Activated CD8-positive, alpha-beta T cell treated with anti-CD3 and anti-CD28 coated beads for 36 hours (primary cell): ENCODE measurements at regions of chr10 and their contacts with region 1.

Region 1: DNA sequence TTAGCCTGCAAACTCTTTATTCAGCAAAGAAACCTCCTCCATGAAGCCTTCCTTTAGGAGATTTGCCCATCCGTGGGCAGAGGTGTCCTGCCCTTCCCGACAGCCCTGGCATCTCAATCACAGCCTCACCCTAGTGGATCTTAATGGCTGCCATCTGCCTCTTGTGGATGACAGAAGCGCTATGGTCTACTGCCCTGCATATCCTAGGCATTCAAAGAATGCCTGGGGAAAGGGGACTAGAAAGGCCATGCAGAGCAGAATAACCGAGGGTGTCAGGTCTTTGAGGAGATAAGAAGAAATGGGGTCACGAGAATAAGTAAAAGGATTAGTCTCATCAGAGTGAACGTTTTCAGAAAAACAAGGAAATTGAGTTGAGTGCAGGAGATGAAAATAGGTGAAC is 57.7 kb upstream of the SPOCK2 start:
- DNase-seq: no peak
- ATAC-seq: no peak
- H3K4me3 Mint-ChIP-seq: no peak overlapping the region
- H3K27ac Mint-ChIP-seq: no peak overlapping the region
- H3K4me1 Mint-ChIP-seq: peaks cover 22% of the 10 kb centered on the region
- H3K27me3 Mint-ChIP-seq: no peaks in the 10 kb centered on the region
- CTCF ChIP-seq: no peak

Region 2: DNA sequence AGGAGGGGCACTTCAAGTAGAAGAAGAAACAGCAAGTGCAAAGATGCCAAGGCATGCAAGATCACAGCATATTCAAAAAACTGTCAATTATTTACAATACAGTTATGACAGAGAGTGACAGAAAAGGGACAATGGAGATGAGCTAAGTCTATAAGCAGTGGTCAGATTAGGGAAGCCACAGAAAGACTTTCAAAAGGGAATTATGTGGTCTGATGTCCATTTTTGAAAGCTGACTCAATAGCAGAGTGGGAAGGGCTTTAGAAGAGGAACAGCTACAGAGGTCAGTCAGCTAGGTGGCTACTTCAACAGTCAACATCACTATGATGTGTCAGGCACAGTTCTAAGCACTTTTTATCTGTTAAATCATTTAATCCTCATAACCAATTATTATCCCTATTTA is 12.6 kb before region 1 on chr10:
- CTCF ChIA-PET with region 1: interaction called, 10 read pairs
- POLR2A ChIA-PET with region 1: no interaction called
- intact Hi-C with region 1: no loop called
- DNase-seq: no peak
- ATAC-seq: no peak
- H3K4me3 Mint-ChIP-seq: no peak overlapping the region
- H3K27ac Mint-ChIP-seq: peak overlapping the region; percentile 0
- H3K4me1 Mint-ChIP-seq: peaks cover 35% of the 10 kb centered on the region
- H3K27me3 Mint-ChIP-seq: no peaks in the 10 kb centered on the region
- CTCF ChIP-seq: no peak